Right ventricle myocardium inferior (tissue), 1 donor: ENCODE measurements at regions of chr6 and their contacts with region 1.

Region 1: GRCh38 chr6:83884523-83884922 is 25.0 kb downstream of the CYB5R4 start:
- DNase-seq: no peak
- ATAC-seq: no peak

Region 2: GRCh38 chr6:84220809-84221409 is 336.4 kb after region 1 on chr6:
- intact Hi-C with region 1: loop called (anchors 1 kb)
- DNase-seq: no peak
- ATAC-seq: no peak

Region 3: DNA sequence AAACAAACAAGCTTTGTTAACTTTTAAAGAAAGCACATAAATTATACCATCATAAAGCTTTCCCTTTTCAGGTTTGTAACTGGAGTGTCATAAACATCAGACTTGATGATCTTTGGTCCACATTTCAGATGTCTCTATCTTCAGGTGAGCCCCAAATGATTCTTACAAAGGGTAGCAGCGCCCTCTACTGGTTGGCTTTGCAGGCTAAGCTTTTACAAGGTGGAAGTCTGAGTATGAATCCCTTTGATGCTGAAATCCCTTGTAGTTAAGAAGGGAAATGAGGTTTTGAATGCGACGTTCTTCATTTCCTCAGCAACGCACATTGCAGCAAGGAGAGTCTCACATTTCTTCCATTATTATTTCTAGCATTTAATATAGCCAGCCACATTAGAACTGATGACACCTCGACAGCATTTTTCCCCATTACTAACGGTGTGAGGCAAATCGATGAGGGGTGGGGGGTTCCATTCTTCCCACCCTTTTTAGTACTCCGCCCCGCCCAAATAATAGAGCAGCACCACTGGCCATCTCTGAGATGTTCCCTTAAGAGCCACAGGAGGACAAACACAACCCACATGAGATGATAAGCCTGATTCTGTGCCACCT is 1439.0 kb after region 1 on chr6:
- intact Hi-C with region 1: loop called (anchors 5 kb)
- DNase-seq: no peak
- ATAC-seq: no peak